Posterior vena cava (tissue), 2 donors: ENCODE measurements at regions of chr1 and their contacts with region 1.

Region 1: DNA sequence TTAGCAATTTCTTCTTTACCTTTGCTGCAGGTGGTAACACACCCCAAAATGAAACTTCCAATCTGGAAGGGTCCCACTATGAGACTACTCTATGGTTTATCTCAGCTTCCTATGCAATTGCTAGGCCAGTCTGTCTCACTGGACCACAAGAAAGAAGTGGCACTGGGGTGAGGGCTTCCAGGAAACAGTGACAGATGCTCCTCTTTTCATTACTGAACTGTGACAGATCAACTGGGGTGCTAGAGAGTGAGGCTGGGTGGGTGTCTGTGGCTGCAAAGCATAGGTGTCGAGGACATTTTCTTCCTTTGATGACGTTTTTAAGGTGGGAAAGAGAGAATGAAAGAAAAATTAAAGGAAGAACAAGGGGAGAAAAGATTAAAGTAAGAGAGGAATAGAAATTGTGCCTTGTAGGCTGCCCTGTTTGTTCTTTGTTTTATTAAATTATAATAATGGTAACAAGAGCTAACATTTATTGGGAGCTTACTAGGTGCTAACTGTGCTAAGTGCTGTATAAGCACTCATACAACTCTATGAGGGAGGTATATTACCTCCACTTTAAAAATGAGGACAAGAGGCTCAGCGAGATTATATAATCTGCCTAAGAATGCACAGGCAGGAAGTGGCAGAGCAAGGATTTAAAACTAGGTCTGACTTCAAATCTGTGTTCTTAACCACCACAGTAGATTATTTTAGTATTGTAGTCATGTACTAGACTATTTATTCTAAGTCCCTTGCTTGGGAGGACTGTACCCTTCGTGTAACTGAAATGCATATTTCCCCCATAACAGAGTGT is 27.8 kb upstream of the DMRTA2 start:
- DNase-seq: no peak

Region 2: DNA sequence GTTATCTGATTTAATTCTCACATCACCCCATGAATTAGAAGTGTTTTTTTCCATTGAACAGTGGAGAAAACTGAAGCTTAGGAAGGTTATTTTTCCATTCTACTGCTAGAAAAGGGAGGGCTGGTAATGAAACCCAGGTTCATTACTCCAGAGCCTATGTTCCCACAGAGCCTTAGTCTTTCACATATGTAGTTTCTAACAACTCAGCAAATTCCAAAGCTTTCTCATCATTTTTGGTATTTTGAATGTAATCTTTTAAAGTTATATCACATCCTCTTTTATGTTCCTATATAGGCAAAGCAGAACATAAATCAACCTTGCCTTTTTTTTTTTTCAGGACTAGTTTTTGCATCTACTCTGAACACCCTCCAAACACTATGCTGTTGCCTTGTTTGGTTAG is 1542.5 kb before region 1 on chr1:
- intact Hi-C with region 1: loop called in 1 of 2 experiments (anchors 5 kb)
- DNase-seq: no peak